ENCODE measurements at regions of chr17 and their contacts with region 1.

Region 1: DNA sequence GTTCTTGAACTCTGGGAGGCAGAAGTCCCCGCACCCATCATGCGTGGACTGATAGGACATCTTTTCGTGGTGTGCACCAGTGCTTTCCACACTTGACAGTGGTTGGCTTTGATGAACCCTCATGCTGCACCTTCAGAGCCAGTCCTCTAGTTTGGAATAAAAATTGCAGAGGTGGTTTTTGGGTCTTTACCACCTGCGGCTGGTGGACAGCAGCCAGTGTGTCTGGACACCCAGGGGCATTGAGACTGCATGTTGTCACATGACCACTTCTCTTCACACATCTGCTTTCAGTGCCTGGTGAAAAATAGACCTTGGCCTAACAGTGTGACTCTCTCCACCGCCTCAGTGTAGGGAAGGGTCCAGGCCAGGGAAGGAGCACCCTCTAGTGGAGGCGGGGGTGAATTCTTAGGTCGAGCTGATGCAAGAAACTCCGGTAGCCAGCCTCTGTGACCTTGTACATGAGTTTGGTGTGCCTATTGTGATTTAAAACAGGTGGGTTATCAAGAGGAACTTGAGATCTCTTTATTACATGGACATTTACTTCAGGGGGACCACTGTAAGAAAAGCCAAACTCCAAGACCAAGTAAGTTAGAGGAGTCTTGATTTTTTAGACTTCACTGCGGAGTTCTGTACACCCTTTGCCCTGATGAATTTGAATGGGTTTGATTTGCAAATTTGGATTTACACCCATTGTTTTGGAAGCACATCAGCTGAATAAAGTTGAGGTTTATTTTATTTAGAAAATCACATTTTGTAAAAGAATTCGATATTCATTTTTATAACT is 17.9 kb downstream of the GOSR2 start:
- DNase-seq: peak; percentile 91
- H3K4me3 ChIP-seq: no peak overlapping the region
- H3K27ac ChIP-seq: peak overlapping the region; percentile 19 to 58; a peak in 2 of 4 replicates
- H3K4me1 ChIP-seq: peaks cover 14 to 20% of the 10 kb centered on the region in 2 experiments; a peak in 3 of 4 replicates
- H3K27me3 ChIP-seq: no peaks in the 10 kb centered on the region
- CTCF ChIP-seq: peak; percentile 95
- EP300 ChIP-seq: peak in 1 of 2 experiments; percentile 44; a peak in 2 of 4 replicates
- RAD21 ChIP-seq: peak; percentile 97

Region 2: DNA sequence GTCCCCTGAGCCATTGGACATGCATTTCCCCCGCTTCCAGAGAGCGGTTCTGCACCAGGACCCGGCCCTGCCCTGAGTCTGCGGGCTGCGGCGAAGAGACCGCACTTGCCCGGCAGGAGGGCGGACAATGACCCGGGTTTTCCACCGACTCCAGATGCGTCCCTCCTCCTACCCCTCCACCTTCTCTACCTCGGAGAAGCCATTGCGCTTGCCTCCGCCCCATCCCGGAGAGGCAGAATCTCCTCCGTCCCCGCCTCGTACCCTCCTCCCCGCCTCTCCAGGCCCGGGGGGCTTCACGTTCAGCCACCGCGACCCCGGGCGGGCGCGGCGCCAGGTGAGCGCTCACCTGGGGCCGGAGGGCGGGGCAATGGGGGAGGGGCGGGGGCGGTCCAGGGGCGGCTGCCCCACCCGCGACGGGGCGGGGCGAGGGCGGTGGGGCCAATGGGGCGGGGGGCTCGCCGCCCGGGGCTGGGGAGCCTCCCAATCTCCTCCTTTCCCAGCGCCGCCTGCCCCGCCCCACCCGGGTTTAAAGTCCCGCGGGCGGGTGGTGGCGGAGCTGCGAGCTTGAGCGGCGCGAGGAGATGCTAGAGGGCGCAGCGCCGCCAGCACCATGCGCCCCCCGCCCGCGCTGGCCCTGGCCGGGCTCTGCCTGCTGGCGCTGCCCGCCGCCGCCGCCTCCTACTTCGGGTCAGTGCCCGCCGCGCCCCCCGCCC is 89.6 kb before region 1 on chr17 and contains the start of gene WNT9B:
- CTCF ChIA-PET with region 1: interaction called, 210 read pairs
- POLR2A ChIA-PET with region 1: interaction called, 4 read pairs
- DNase-seq: peak; percentile 90
- H3K4me3 ChIP-seq: peak within 1 kb of the TSS; percentile 48 to 58
- H3K27ac ChIP-seq: no peak within 1 kb of the TSS
- H3K4me1 ChIP-seq: peaks cover 0 to 11% of the 10 kb centered on the region in 2 experiments; a peak in 1 of 4 replicates
- H3K27me3 ChIP-seq: peaks cover 54% of the 10 kb centered on the region
- CTCF ChIP-seq: peak; percentile 17; the same call in 1 of the 2 replicates
- EP300 ChIP-seq: no peak
- RAD21 ChIP-seq: no peak
- polyA plus RNA-seq, gene WNT9B: not detected in 2 replicates

Region 3: DNA sequence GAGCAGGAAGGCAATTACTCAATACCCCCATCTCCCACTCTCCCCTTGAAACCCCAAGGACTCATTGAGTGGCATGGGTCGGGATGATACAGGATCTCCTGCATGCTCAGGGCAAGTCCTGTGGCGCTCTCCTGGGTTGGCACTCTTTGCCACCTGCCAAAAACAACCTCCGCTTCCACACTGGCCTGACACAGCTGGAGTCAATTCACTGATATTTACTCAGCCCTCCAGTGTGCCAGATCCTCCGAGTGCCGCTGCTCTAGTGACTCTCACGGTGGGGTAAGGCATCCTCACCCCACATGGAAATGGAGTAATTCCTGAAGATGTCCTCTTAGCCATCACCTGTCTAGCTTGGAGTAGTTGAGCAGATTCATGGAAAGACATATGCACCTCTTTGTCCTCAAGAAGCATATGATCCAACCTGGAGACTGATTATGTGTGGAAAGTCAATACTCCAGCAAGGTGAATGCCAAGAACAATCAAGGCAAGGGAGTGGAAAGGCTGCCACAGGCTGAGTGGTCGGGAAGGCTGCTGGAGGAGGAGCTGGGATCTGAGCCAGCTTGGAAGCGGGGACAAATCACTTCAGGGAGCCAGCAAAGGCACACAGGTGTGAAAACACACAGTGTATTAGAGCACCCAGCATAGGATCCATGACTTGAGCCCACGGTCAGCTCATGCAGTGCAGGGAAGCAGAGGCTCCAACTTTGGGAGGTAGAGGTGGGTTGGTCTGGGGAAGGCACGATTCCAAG is 30.5 kb before region 1 on chr17:
- CTCF ChIA-PET with region 1: interaction called, 18 read pairs
- POLR2A ChIA-PET with region 1: interaction called, 3 read pairs
- DNase-seq: no peak
- H3K4me3 ChIP-seq: no peak overlapping the region
- H3K27ac ChIP-seq: no peak overlapping the region
- H3K4me1 ChIP-seq: no peaks in the 10 kb centered on the region
- H3K27me3 ChIP-seq: peaks cover 29% of the 10 kb centered on the region; the same call in 1 of the 2 replicates
- CTCF ChIP-seq: no peak
- EP300 ChIP-seq: no peak
- RAD21 ChIP-seq: no peak

Region 4: DNA sequence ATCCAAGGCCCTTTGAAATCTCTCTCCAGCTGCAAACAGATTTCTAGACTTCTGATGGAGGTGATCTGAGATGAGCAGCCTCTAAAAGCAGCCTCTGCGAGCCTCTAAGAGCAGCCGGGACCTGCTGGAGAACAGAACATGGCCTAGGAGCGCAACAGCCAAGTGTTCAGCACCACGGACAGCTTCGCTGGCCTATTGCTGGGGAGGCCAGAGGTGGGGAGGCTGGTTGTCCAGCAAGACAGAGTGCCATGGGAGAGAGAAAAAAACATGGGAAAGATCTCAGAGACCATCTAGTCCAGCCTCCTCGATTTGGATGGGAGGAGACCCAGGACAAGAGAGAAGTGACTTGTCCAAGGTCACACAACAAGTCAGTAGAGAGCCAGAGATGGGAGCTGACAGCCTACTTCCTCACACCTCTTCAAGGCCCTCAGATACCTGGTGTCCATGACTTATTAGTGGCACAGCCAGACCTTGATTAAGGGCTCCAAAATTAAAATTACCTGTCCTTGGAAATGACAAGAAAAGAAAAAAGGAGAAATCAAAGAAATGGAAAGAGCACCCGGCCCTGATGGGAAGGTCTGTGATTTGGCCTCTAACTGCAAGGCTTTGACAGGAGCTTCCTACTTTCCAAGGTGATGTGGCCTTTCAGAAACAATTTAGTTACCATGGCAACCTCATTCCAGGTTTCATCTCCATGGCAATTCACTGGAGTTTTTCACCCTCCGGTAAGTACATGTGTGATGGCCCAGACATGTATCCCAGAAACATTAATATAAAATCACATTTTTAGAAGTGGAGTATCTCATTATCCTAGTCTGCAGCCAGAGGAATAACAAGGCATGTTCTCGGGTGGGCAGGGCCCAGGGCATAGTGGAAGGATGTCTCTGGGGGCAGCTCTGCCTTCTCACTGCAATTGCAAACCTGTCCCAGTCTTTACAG is 23.8 kb after region 1 on chr17:
- CTCF ChIA-PET with region 1: interaction called, 71 read pairs
- POLR2A ChIA-PET with region 1: interaction called, 4 read pairs
- DNase-seq: no peak
- H3K4me3 ChIP-seq: no peak overlapping the region
- H3K27ac ChIP-seq: no peak overlapping the region
- H3K4me1 ChIP-seq: peaks cover 0 to 2% of the 10 kb centered on the region in 2 experiments; a peak in 1 of 4 replicates
- H3K27me3 ChIP-seq: no peaks in the 10 kb centered on the region
- CTCF ChIP-seq: no peak
- EP300 ChIP-seq: no peak
- RAD21 ChIP-seq: no peak

Region 5: DNA sequence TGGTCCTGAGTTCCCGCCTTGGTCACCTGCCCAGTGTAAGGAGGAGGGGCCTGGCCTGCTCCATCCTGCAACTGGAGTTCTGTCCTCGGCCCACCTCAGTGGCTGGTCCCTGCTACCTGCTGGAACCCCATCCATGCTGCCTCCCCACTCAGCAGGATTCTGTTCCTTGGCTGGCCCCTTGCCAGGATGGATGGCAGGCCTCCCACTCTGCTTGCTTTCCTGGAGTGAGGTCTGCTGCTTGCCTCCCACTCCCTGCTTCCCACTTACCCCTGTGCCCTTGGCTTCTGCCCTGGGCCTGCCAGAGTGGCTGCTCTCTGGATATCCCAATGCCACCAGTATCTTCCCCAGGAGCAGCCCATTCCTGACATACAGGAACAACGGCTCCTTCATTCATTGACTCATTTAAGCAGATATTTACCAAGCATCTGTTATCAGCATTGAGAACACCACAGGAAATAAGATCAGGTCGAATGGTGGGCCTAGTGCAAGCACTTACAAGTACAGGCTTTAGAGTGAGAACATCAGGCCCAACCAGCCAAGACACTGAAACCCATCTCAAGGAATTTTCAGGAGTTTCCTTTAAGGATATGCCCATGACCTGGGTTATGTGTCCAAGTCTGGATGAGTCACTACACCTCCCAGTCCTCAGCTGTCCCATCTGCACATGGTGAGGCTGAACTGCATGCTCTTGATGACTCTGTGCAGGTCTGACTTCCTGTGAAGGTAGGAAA is 55.2 kb after region 1 on chr17:
- CTCF ChIA-PET with region 1: interaction called, 278 read pairs
- POLR2A ChIA-PET with region 1: interaction called, 3 read pairs
- DNase-seq: no peak
- H3K4me3 ChIP-seq: no peak overlapping the region
- H3K27ac ChIP-seq: no peak overlapping the region
- H3K4me1 ChIP-seq: no peaks in the 10 kb centered on the region; a peak in 1 of 4 replicates
- H3K27me3 ChIP-seq: no peaks in the 10 kb centered on the region
- CTCF ChIP-seq: no peak
- EP300 ChIP-seq: no peak
- RAD21 ChIP-seq: no peak

Region 6: DNA sequence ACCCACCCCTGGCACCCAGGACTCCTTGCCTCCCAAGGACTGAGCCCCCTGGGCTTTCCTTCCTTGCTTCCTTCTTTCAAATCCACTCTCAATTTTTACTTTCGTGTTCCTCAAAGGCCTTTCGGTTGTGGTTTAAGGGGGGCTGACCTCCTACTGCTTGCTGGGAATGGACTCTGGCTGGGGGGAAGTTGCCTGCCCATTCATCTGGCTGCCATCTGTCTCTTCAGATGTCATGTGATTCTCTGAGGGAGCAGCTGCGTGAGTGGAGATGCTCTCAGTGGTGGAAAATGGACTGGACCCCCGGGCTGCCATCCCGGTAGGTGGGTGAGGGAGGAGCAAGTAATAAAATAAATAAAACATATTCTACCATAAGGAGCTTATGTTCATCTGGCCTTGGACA is 132.1 kb after region 1 on chr17:
- CTCF ChIA-PET with region 1: no interaction called
- POLR2A ChIA-PET with region 1: no interaction called
- DNase-seq: peak; percentile 63
- H3K4me3 ChIP-seq: no peak overlapping the region
- H3K27ac ChIP-seq: peak overlapping the region in 1 of 2 experiments; percentile 45; a peak in 1 of 4 replicates
- H3K4me1 ChIP-seq: peaks cover 7 to 11% of the 10 kb centered on the region in 2 experiments; a peak in 3 of 4 replicates
- H3K27me3 ChIP-seq: no peaks in the 10 kb centered on the region
- CTCF ChIP-seq: no peak
- EP300 ChIP-seq: no peak
- RAD21 ChIP-seq: no peak